Heart right ventricle (tissue), 16 donors: ENCODE measurements at regions of chr20 and their contacts with region 1.

Region 1: DNA sequence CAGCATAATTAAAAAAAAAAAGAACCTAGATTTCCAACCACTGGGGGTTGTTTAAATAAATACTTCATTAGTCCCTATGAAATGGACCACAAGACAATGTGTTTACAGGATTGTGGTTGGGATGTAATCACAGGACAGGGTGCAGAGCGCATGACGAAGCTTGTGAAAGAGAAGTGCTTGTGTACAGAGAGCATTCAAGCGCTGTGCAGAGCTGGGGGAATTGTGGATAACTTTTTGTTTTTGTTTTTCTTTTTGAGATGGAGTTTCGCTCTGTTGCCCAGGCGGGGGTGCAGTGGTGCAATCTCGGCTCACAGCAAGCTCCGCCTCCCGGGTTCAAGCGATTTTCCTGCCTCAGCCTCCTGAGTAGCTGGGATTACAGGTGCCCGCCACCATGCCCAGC is 22.3 kb downstream of the LAMA5 start:
- DNase-seq: no peak
- ATAC-seq: no peak
- H3K4me3 ChIP-seq: no peak overlapping the region
- H3K27ac ChIP-seq: no peak overlapping the region
- H3K4me1 ChIP-seq: no peaks in the 10 kb centered on the region
- H3K27me3 ChIP-seq: no peaks in the 10 kb centered on the region
- CTCF ChIP-seq: no peak

Region 2: DNA sequence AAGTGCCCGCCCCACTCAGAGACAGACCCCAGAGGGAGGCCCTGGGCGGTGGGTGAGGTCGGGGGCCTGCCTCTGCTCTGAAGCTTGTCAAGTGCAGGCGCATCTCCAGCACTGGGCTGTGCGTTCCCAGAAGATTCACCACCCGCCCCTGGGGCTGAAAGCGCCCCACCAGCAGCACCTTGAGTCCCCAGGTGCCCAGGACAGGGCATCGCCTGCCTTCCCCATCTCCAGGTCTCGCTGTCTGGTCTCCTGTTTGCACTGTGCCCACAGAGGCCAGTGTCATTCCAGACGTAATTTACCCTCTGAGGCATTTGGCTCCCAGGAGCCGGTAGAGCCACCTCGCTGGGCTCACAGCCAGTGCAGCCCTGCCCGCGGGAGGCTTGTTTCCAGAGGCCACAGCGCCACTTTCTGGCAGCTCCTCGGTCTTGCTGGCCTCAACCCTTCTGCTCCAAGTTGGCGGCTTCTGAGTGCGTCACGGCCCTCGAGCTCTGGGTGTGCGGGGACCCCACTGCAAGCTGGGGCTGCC is 470.2 kb before region 1 on chr20:
- intact Hi-C with region 1: no loop called
- DNase-seq: peak in 1 of 2 donors; percentile 33
- ATAC-seq: peak; percentile 37 to 68 (median 58)
- H3K4me3 ChIP-seq: no peak overlapping the region
- H3K27ac ChIP-seq: no peak overlapping the region
- H3K4me1 ChIP-seq: no peaks in the 10 kb centered on the region
- H3K27me3 ChIP-seq: peaks cover 0 to 24% (median 5%) of the 10 kb centered on the region in 7 donors
- CTCF ChIP-seq: peak in 7 of 9 donors; percentile 7 to 53 (median 33)

Region 3: GRCh38 chr20:62310757-62311121 is 34.0 kb before region 1 on chr20:
- intact Hi-C with region 1: loop called in 4 of 10 experiments (anchors 5 kb)
- DNase-seq: no peak
- ATAC-seq: no peak
- H3K4me3 ChIP-seq: no peak overlapping the region
- H3K27ac ChIP-seq: no peak overlapping the region
- H3K4me1 ChIP-seq: peaks cover 0 to 30% (median 5%) of the 10 kb centered on the region in 9 donors
- H3K27me3 ChIP-seq: no peaks in the 10 kb centered on the region
- CTCF ChIP-seq: no peak